Gastrocnemius medialis (tissue), 4 donors: ENCODE measurements at regions of chr5 and their contacts with region 1.

Region 1: DNA sequence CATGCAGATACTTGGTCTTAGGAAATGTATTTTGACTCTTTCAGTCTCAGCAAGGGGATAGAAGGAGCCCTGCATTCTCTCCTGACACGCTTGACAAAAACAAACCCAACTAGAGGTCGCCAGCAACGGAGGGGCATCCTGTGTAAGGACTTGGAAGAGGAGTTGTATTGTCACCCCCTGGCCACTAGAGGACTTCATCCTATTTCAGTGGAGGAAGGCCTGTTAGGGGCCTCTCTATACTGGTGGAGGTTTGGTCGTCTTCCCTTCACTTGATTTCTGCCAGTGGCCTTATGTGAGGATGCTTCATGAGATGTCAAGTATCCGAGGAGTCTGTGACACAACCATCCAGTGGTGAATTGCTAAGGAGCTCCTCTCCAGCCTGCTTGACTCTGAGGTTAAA is 122.8 kb upstream of the STC2 start:
- DNase-seq: peak in 1 of 2 donors; percentile 41
- ATAC-seq: no peak
- H3K4me3 ChIP-seq: no peak overlapping the region
- H3K27ac ChIP-seq: peak overlapping the region; percentile 88 to 94 (median 90)
- H3K4me1 ChIP-seq: peaks cover 36 to 45% of the 10 kb centered on the region in 2 donors
- H3K27me3 ChIP-seq: no peaks in the 10 kb centered on the region
- CTCF ChIP-seq: peak; percentile 40 to 70 (median 48)
- POLR2A ChIP-seq: no peak

Region 2: GRCh38 chr5:173331956-173332479 is 119.0 kb before region 1 on chr5:
- in situ Hi-C with region 1: no loop called
- intact Hi-C with region 1: loop called (anchors 1 kb)
- DNase-seq: peak; percentile 49 to 82
- ATAC-seq: peak; percentile 47
- H3K4me3 ChIP-seq: no peak overlapping the region
- H3K27ac ChIP-seq: no peak overlapping the region
- H3K4me1 ChIP-seq: peaks cover 8 to 27% of the 10 kb centered on the region in 2 donors
- H3K27me3 ChIP-seq: no peaks in the 10 kb centered on the region
- CTCF ChIP-seq: peak; percentile 84 to 93 (median 90)
- POLR2A ChIP-seq: no peak

Region 3: GRCh38 chr5:173536312-173536641 is 85.2 kb after region 1 on chr5:
- in situ Hi-C with region 1: no loop called
- intact Hi-C with region 1: loop called (anchors 1 kb)
- DNase-seq: no peak
- ATAC-seq: no peak
- H3K4me3 ChIP-seq: no peak overlapping the region
- H3K27ac ChIP-seq: peak overlapping the region in 2 of 4 donors; percentile 28 to 75
- H3K4me1 ChIP-seq: peaks cover 6 to 10% of the 10 kb centered on the region in 2 donors
- H3K27me3 ChIP-seq: no peaks in the 10 kb centered on the region
- CTCF ChIP-seq: no peak
- POLR2A ChIP-seq: no peak

Region 4: DNA sequence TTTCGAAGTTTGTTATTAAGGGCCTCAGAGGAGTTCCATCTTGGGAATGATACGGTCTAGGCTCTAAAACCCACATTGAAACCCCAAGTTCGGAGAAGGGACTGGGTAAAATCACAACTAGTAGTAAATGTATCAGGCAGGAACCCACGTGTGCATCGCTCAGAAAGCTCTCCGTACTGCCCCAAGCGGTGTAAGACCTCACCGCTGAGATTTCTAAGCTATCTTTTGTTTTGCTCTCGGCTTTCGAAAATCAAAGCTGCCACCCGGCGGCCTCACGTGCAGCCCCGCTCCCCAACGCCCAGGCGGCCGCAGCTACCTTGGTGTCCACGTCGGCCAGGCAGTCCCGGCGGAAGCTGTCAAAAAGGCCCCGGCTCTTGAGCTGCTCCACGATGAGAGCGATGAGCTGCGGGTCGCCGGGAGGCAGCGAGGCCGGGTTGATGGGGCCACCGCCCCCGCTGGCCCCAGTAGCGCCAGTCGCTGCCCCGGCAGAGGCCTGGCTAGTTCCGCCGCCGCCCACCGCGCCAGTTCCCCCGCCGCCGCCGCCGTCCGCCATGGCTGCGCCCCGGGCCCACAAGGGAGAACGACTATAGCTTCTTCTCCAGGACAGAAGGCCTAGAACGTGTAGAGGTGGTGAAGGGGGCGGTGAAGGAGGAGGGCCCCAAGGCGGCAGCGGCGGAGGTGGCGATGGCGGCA is 165.0 kb after region 1 on chr5:
- in situ Hi-C with region 1: no loop called
- intact Hi-C with region 1: loop called (anchors 1 kb)
- DNase-seq: peak; percentile 35 to 61
- ATAC-seq: peak; percentile 73 to 77
- H3K4me3 ChIP-seq: peak overlapping the region; percentile 75 to 91 (median 88)
- H3K27ac ChIP-seq: peak overlapping the region; percentile 95 to 98 (median 97)
- H3K4me1 ChIP-seq: peaks cover 40 to 49% of the 10 kb centered on the region in 2 donors
- H3K27me3 ChIP-seq: no peaks in the 10 kb centered on the region
- CTCF ChIP-seq: peak; percentile 46 to 81 (median 67)
- POLR2A ChIP-seq: no peak

Region 5: GRCh38 chr5:173764321-173765029 is 313.4 kb after region 1 on chr5:
- in situ Hi-C with region 1: loop called in 1 of 4 experiments (anchors 25 kb)
- intact Hi-C with region 1: loop called (anchors 5 kb)
- DNase-seq: peak; percentile 91 to 96
- ATAC-seq: peak; percentile 59 to 65
- H3K4me3 ChIP-seq: no peak overlapping the region
- H3K27ac ChIP-seq: peak overlapping the region; percentile 90 to 95 (median 94)
- H3K4me1 ChIP-seq: peaks cover 57 to 63% of the 10 kb centered on the region in 2 donors
- H3K27me3 ChIP-seq: no peaks in the 10 kb centered on the region
- CTCF ChIP-seq: no peak
- POLR2A ChIP-seq: peak; percentile 8 to 57

Region 6: GRCh38 chr5:173907686-173908371 is 456.8 kb after region 1 on chr5:
- in situ Hi-C with region 1: no loop called
- intact Hi-C with region 1: loop called (anchors 10 kb)
- DNase-seq: peak in 1 of 2 donors; percentile 43
- ATAC-seq: peak; percentile 53 to 65
- H3K4me3 ChIP-seq: no peak overlapping the region
- H3K27ac ChIP-seq: peak overlapping the region; percentile 89 to 99 (median 95)
- H3K4me1 ChIP-seq: peaks cover 62 to 75% of the 10 kb centered on the region in 2 donors
- H3K27me3 ChIP-seq: no peaks in the 10 kb centered on the region
- CTCF ChIP-seq: no peak
- POLR2A ChIP-seq: no peak

Region 7: GRCh38 chr5:173925448-173926071 is 474.5 kb after region 1 on chr5:
- in situ Hi-C with region 1: no loop called
- intact Hi-C with region 1: no loop called
- DNase-seq: peak in 1 of 2 donors; percentile 53
- ATAC-seq: no peak
- H3K4me3 ChIP-seq: no peak overlapping the region
- H3K27ac ChIP-seq: peak overlapping the region; percentile 89 to 99 (median 95)
- H3K4me1 ChIP-seq: peaks cover 96 to 97% of the 10 kb centered on the region in 2 donors
- H3K27me3 ChIP-seq: no peaks in the 10 kb centered on the region
- CTCF ChIP-seq: peak in 3 of 5 experiments; percentile 12 to 43 (median 34)
- POLR2A ChIP-seq: no peak